Activated CD8-positive, alpha-beta memory T cell treated with anti-CD3 and anti-CD28 coated beads, Interleukin-2, amount 10 ng/mL, durations not matched to agents 7 days and 5 days (primary cell): ENCODE measurements at regions of chr5 and their contacts with region 1.

Region 1: DNA sequence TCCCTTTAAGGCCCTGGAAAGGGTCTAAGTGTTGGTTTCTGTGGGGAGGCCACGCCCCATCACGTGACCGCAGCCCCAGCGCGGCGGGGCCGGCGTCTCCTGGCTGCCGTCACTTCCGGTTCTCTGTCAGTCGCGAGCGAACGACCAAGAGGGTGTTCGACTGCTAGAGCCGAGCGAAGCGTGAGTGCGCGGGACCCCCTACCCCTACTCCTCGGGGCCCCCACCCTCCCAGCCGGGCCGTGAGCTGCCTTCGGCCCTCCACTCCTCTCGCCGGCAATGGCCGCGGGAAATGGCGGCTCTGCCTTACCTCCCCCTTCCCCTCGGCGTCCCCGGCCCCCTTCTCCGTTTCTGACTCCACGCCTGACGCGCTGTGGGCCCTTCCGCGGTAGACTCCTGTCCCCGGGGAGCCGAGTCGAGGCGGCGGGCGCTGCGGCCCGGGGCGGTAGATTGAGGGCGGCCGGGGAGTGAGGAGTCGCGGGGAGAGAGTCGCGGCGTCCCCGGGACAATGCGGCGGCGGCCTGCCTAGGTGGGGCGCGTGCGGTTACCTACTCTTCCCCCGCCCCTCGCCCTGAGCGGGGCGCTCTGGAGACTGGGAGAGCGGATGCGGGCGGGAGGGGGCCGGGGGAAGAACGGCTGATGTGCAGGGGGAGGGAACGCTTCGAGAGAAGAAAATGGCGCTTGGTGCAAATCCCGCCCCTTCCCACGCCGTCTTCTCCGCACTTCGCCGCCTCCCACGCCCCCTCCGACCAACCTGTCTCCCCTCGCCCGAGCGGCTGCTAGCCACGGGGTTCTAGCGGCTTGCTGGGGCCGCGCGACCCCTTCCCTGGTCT is at the start of gene SUB1:
- DNase-seq: peak; percentile 96
- ATAC-seq: peak; percentile 87
- H3K4me3 Mint-ChIP-seq: peak within 1 kb of the TSS; percentile 100
- H3K27ac Mint-ChIP-seq: peak within 1 kb of the TSS; percentile 96
- H3K4me1 Mint-ChIP-seq: peaks cover 70% of the 10 kb centered on the region
- H3K27me3 Mint-ChIP-seq: no peaks in the 10 kb centered on the region
- total RNA-seq, gene SUB1: 525 to 528 TPM

Region 2: DNA sequence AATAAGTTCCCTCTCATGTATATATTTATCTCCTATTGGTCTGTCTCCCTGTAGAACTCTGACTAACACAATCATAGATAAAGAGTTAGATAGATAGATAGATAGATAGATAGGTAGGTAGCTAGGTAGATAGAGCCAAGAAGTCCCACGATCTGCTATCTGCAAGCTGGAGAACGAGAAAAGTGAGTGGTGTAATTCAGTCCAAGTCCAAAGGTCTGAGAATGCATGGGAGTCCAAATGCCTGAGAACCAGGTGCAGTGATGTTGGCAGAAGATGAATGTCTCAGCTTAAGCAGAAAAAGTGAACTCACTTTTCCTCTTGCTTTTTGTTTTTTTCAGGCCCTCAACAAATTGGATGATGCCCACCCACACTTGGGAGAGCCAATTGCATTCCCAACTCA is 103.5 kb before region 1 on chr5:
- CTCF ChIA-PET with region 1: interaction called, 149 read pairs
- DNase-seq: no peak
- ATAC-seq: no peak
- H3K4me3 Mint-ChIP-seq: no peak overlapping the region
- H3K27ac Mint-ChIP-seq: no peak overlapping the region
- H3K4me1 Mint-ChIP-seq: no peaks in the 10 kb centered on the region
- H3K27me3 Mint-ChIP-seq: no peaks in the 10 kb centered on the region

Region 3: GRCh38 chr5:32496104-32496503 is 89.6 kb before region 1 on chr5:
- CTCF ChIA-PET with region 1: interaction called, 149 read pairs
- DNase-seq: no peak
- ATAC-seq: no peak
- H3K4me3 Mint-ChIP-seq: no peak overlapping the region
- H3K27ac Mint-ChIP-seq: no peak overlapping the region
- H3K4me1 Mint-ChIP-seq: peaks cover 9% of the 10 kb centered on the region
- H3K27me3 Mint-ChIP-seq: peaks cover 3% of the 10 kb centered on the region

Region 4: DNA sequence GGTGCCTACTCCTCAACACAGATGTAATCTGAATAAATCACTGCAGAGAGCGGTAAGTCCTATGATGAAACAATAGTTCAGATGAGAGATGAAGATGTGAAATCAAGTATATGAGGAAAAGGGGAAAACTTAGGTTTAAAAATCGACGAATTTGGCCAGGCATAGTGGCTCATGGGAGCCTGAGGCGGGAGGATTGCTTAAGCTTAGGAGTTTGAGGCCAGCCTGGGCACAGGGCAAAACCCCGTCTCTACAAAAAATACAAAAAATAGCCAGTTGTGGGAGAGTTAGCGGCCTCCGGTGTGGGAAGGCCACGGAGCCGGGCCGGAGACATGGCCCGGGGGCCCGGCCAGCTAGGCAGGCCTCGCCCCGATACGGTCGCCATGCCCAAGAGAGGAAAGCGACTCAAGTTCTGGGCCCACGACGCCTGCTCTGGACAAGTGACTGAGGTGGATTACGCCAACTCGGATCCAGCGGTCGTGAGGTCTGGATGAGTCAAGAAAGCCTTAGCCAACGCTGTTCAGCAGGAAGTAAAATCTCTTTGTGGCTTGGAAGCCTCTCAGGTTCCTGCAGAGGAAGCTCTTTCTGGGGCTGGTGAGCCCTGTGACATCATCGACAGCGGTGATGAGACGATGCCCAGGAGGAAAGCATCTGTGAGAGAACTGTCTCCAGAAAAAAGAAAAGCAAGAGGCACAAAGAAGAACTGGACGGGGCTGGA is 63.1 kb before region 1 on chr5:
- CTCF ChIA-PET with region 1: interaction called, 23 read pairs
- DNase-seq: peak; percentile 63
- ATAC-seq: peak; percentile 73
- H3K4me3 Mint-ChIP-seq: no peak overlapping the region
- H3K27ac Mint-ChIP-seq: no peak overlapping the region
- H3K4me1 Mint-ChIP-seq: peaks cover 17% of the 10 kb centered on the region
- H3K27me3 Mint-ChIP-seq: peaks cover 12% of the 10 kb centered on the region

Region 5: DNA sequence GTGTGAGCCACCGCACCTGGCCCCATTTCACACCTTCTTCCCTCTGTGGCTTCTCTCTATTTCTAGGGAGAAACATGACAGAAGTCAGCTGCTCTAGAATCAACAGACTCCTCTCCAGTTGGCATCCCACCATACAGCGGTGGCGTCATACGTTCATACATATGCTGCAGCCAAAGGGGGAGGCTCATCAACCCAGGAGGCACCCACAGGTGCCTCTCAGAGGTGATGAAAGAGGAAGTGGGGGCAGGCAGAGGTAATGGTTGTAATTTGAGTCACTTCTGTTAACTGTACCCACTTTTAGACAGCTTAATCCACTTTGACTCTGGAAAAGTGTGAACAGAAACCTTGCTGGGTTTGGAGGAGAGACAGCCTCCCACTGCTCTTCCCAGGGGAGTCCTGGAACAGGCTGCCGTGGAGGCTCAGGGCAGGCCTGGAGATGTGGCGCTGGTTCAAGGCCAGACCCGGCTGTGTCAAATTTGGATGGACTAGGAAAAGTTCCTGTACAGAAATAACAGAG is 47.6 kb before region 1 on chr5:
- CTCF ChIA-PET with region 1: interaction called, 41 read pairs
- DNase-seq: peak; percentile 85
- ATAC-seq: peak; percentile 65
- H3K4me3 Mint-ChIP-seq: peak overlapping the region; percentile 43
- H3K27ac Mint-ChIP-seq: peak overlapping the region; percentile 79
- H3K4me1 Mint-ChIP-seq: peaks cover 94% of the 10 kb centered on the region
- H3K27me3 Mint-ChIP-seq: no peaks in the 10 kb centered on the region

Region 6: DNA sequence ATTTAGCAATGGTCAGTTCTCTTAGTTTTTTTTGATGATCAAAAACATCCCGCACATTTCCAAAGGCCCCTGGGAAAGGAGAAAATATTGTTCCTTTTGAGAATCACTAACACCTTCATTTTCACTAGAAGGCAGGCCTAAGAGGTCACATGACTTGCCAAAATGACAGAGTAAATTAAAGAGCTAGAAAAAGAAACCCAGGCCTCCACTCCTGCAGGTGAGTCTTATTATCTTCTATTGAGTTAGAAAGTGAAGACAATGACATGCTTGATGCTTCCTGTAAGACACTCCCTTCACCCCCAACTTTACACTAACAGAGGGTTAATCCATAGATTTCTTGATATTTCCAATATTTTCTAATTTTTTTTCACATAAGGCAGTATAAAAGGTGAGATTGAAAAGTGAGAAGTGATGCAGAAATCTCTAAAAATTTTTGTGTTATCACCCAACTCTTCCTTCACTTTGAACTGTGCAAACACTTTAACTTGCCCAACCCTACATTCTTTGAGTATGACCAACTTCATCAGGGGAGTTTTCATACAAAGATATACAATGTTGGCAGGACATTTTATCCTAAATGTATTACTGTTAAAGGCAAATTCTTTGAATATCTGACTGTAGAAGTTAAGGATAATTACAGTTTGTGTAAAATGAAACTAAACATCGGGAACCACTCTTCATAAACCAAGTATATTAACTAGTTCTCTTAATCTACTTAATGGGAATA is 56.8 kb after region 1 on chr5:
- CTCF ChIA-PET with region 1: no interaction called
- DNase-seq: no peak
- ATAC-seq: no peak
- H3K4me3 Mint-ChIP-seq: no peak overlapping the region
- H3K27ac Mint-ChIP-seq: no peak overlapping the region
- H3K4me1 Mint-ChIP-seq: peaks cover 8% of the 10 kb centered on the region
- H3K27me3 Mint-ChIP-seq: no peaks in the 10 kb centered on the region